ENCODE measurements at regions of chr10 and their contacts with region 1.

Region 1: DNA sequence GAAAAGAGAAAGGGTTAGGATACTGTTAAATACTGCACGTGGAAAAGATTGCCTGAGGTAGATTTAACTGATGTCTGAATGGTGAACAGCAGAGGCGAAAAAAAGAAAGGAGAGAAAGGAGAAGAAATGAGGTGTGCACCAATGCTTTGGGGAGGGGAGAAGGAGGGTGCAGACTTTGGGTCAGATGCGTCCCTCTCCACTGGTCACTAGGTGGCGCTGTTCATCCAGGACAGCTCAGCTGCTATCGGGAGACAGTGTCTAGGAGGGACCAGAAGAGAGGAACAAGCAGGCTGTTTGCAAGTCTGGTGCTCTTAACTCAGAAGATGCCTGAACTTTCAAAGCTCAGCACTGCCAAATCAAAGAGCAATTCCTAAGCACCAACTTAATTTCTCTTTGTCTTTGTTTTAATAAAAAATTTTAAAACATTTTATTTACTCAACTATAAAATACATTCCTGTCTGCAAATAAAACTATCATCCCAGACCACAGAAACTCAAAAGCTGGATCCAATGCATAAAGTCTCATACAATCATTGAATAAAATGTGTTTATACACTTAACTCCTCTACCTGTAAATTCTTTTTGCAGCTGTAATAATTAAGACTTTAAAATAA is 83.9 kb upstream of the PDLIM1 start:
- DNase-seq: peak; percentile 90

Region 2: DNA sequence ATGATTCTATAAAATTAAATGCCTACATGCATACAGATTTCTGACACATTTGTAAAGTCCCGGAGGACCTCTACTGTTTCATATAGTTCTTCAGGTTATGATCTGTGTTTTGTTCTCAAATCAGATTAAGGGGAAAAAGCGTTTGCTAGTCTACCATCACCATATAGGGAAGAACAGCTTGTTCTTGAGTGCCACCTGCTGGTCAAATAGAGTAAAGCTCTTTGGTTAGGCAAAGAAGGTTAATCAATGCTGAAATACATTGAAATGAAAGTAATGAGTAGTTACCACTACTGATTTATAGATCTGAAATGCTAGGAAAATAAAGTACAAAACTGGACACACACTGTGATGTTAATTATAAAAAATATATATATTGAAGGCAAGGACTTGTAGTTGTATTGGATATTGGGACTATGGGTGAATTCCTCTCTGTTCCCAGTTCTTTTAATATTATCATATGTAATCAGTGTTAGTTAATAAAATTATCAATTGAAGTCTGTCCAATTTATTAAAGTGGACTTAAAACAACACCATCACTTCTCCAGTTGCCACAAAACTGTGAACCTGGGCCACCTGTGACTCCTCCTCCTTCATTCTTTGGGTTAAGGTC is 11.3 kb before region 1 on chr10:
- CTCF ChIA-PET with region 1: interaction called, 27 read pairs
- POLR2A ChIA-PET with region 1: no interaction called
- DNase-seq: peak; percentile 73

Region 3: GRCh38 chr10:95388539-95388938 is 13.8 kb after region 1 on chr10:
- CTCF ChIA-PET with region 1: interaction called, 33 read pairs
- POLR2A ChIA-PET with region 1: no interaction called
- DNase-seq: no peak

Region 4: GRCh38 chr10:95601116-95601719 is 226.5 kb after region 1 on chr10:
- CTCF ChIA-PET with region 1: interaction called, 68 read pairs
- POLR2A ChIA-PET with region 1: no interaction called
- DNase-seq: peak; percentile 90

Measured in HEK293T (cell line).